ENCODE measurements at regions of chr19 and their contacts with region 1.

Region 1: DNA sequence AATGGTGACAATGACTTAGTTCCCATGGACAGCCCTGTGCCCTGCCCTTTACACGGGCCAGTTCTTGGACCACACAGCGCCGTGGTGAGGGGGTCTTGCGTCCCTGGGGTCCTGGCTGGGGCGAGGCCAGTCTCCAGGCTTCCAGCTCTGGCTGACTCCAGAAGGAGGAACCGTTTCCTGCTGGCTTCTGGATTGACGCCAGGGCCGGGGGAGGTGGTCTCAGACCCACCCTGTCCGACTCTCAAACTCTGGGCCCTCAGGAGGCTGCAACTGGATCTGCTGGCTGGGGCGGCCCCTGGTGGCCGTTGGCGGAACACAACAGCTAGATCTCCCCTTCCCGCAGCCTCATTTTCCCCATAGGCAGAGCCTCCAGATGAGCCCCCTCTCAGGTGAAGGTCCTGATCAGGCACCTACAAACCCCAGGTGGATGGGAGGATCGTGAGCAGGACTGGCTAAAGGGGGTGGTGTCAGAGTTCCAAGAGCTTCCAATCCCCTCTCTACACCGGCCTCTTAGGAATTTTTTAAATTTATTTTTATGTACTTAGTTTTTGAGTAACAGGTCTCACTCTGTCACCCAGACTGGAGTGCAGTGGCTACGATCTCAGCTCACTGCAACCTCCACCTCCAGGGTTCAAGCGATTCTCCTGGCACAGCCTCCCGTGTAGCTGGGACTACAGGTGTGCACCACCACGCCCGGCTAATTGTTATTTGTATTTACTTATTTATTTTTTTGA is 8.0 kb downstream of the CCDC194 start:
- DNase-seq: peak; percentile 81
- ATAC-seq: peak; percentile 70

Region 2: DNA sequence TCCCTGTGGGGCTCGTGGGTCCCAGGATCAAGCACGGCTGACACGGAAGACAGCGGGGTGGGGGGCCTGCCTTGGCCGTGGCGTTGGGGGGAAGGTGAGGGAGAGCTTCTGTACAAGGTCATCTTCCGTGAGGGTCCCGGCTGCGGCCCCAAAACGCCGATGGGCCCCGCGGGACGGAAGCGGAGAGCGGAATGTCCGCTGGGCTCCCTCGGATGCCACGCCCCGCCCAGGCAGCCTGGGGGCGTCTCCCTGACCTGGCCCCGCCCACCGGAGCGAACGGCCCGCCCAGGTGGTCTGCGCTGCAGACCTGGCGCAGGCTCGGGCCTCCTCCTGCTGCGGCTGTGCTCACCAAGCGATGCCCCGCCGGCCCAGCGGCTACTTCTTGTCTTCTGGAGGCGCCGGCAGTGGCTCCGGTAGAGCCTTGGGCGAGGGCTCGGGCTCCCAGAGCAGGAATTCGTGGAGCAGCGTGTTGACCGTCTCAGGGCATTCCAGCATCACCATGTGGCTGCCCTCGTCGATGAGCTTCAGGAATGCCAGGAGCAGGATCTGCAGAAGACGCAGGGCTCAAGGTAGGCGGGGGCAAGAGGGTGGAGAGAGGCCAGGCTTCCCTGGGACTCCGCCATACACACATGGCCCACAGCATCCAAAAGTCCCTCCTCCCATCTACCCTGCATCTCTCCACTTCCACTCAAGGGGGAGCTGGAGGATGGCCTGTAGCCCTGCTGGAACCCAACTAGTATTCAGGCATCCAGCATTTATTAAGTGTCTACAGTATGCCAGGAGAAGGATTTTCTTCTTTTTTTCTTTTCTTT is 93.6 kb before region 1 on chr19:
- intact Hi-C with region 1: loop called (anchors 10 kb)
- DNase-seq: peak; percentile 86
- ATAC-seq: peak; percentile 91

Region 3: DNA sequence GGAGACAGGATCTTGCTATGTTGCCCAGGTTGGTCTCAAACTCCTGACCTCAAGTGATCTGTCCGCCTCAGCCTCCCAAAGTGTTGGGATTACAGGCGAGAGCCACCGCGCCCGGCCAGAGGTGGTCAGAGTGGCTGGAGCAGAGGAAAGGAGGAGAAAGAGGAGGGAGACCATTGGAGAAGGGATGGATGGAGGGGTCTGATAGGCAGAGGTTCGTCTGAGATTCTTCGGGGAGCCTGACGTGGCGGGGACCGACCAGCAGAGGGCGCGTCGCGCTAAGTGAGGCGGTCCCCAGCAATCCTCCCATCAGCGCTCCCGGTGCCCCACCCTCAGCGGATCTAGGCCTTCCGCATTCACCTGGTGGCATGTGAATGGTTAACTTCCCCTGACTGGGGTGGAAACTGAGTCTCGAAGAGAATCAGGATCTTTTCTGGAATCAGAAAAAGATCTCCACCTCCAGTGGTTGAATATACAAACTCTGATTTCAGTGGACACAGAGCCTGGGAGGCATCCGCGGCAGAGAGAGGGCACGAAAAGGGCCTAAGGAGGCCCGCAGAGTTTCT is 39.9 kb before region 1 on chr19:
- intact Hi-C with region 1: loop called (anchors 5 kb)
- DNase-seq: peak; percentile 86
- ATAC-seq: peak; percentile 90